Activated CD4-positive, alpha-beta memory T cell treated with anti-CD3 and anti-CD28 coated beads for 36 hours (primary cell): ENCODE measurements at regions of chr11 and their contacts with region 1.

Region 1: DNA sequence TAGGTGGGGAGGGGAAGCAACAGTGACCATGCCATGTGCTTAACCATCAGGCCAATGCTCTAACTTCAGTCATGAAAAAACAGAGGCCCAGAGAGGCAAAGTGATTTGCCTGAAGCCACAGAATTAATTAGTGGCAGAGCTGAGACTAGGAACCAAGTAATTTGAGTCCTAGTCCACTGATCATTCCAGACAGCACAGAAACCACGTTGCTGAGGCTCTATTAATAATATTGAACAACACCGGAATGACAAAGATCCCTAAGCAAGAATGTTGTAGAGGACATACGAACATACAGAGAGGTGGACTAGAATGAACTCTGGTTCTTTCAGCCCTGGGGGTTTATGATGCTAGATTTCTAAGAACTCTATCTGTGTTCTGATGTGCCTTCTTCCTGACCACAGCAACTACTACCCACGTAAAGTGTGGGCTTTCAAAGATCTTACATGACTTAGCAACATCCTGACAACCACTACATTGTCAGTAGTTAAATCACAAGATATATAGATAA is 92.3 kb downstream of the GAB2 start:
- DNase-seq: peak; percentile 16
- H3K4me3 Mint-ChIP-seq: no peak overlapping the region
- H3K27ac Mint-ChIP-seq: peak overlapping the region; percentile 77
- H3K4me1 Mint-ChIP-seq: peaks cover 40% of the 10 kb centered on the region
- H3K27me3 Mint-ChIP-seq: no peaks in the 10 kb centered on the region

Region 2: GRCh38 chr11:78310500-78310909 is 14.8 kb before region 1 on chr11:
- CTCF ChIA-PET with region 1: no interaction called
- POLR2A ChIA-PET with region 1: no interaction called
- intact Hi-C with region 1: loop called (anchors 1 kb)
- DNase-seq: no peak
- H3K4me3 Mint-ChIP-seq: no peak overlapping the region
- H3K27ac Mint-ChIP-seq: no peak overlapping the region
- H3K4me1 Mint-ChIP-seq: peaks cover 13% of the 10 kb centered on the region
- H3K27me3 Mint-ChIP-seq: no peaks in the 10 kb centered on the region

Region 3: GRCh38 chr11:78363018-78363619 is 37.8 kb after region 1 on chr11:
- CTCF ChIA-PET with region 1: no interaction called
- POLR2A ChIA-PET with region 1: no interaction called
- intact Hi-C with region 1: loop called (anchors 1 kb)
- DNase-seq: no peak
- H3K4me3 Mint-ChIP-seq: no peak overlapping the region
- H3K27ac Mint-ChIP-seq: no peak overlapping the region
- H3K4me1 Mint-ChIP-seq: no peaks in the 10 kb centered on the region
- H3K27me3 Mint-ChIP-seq: no peaks in the 10 kb centered on the region